Activated CD4-positive, alpha-beta T cell treated with anti-CD3 and anti-CD28 coated beads for 36 hours (primary cell): ENCODE measurements at regions of chrX and their contacts with region 1.

Region 1: DNA sequence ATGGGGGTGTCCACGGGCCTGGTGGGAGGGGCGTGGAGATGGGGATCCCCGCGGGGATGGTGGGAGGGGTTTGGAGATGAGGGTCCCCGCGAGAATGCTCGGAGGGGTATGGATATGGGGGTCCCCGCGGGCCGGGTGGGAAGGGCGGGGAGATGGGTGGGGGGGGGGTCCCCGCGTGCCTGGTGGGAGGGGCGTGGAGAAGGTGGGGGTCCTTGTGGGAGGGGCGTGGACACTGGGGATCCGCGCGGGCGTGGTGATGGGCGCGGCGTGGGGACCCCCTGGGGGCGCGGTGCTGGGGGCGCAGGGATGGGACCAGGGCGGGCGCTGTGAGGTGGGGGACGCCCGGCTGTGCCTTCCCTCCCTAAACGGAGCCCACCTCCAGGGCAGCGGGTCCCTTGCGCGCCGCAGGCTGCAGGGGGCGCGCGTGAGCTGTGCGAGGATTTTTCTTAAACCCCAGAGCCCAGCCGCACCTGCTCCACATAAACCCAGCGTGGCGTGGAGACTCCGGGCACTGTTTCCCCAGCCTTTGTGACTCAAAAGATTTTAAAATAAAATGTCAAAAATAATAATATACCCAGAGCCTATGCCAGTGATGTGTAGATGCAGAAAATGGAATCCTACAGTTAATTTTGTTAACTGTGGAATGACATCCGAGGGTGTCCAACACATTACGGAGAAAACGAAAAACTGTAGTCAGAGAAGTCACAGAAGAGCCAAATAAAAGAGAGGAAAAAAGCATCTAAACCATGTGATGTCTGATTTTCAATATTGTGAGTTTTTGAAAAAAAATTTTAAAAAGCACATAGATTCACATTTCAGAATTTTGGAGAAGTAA is 1.5 kb upstream of the ASMTL start:
- DNase-seq: peak; percentile 96
- ATAC-seq: peak; percentile 57
- H3K4me3 Mint-ChIP-seq: peak overlapping the region; percentile 53
- H3K27ac Mint-ChIP-seq: peak overlapping the region; percentile 47
- H3K4me1 Mint-ChIP-seq: peaks cover 8% of the 10 kb centered on the region
- H3K27me3 Mint-ChIP-seq: no peaks in the 10 kb centered on the region

Region 2: GRCh38 chrX:386768-387575 is 1067.2 kb before region 1 on chrX and contains the start of gene PPP2R3B:
- CTCF ChIA-PET with region 1: no interaction called
- POLR2A ChIA-PET with region 1: no interaction called
- intact Hi-C with region 1: loop called in 1 of 2 experiments (anchors 5 kb)
- DNase-seq: peak; percentile 99
- ATAC-seq: peak; percentile 99
- H3K4me3 Mint-ChIP-seq: peak within 1 kb of the TSS; percentile 88
- H3K27ac Mint-ChIP-seq: peak within 1 kb of the TSS; percentile 96
- H3K4me1 Mint-ChIP-seq: peaks cover 8% of the 10 kb centered on the region
- H3K27me3 Mint-ChIP-seq: no peaks in the 10 kb centered on the region
- total RNA-seq, gene PPP2R3B: 23.3 to 26.8 TPM

Region 3: GRCh38 chrX:1391707-1392375 is 62.3 kb before region 1 on chrX and contains the start of gene SLC25A6:
- CTCF ChIA-PET with region 1: no interaction called
- POLR2A ChIA-PET with region 1: no interaction called
- intact Hi-C with region 1: loop called (anchors 1 kb)
- DNase-seq: peak; percentile 100
- ATAC-seq: peak; percentile 98
- H3K4me3 Mint-ChIP-seq: peak within 1 kb of the TSS; percentile 82
- H3K27ac Mint-ChIP-seq: peak within 1 kb of the TSS; percentile 92
- H3K4me1 Mint-ChIP-seq: peaks cover 58% of the 10 kb centered on the region
- H3K27me3 Mint-ChIP-seq: no peaks in the 10 kb centered on the region
- total RNA-seq, gene SLC25A6: 396 to 456 TPM

Region 4: GRCh38 chrX:1442016-1442665 is 12.0 kb before region 1 on chrX:
- CTCF ChIA-PET with region 1: no interaction called
- POLR2A ChIA-PET with region 1: no interaction called
- intact Hi-C with region 1: no loop called
- DNase-seq: no peak
- ATAC-seq: no peak
- H3K4me3 Mint-ChIP-seq: no peak overlapping the region
- H3K27ac Mint-ChIP-seq: no peak overlapping the region
- H3K4me1 Mint-ChIP-seq: no peaks in the 10 kb centered on the region
- H3K27me3 Mint-ChIP-seq: no peaks in the 10 kb centered on the region

Region 5: DNA sequence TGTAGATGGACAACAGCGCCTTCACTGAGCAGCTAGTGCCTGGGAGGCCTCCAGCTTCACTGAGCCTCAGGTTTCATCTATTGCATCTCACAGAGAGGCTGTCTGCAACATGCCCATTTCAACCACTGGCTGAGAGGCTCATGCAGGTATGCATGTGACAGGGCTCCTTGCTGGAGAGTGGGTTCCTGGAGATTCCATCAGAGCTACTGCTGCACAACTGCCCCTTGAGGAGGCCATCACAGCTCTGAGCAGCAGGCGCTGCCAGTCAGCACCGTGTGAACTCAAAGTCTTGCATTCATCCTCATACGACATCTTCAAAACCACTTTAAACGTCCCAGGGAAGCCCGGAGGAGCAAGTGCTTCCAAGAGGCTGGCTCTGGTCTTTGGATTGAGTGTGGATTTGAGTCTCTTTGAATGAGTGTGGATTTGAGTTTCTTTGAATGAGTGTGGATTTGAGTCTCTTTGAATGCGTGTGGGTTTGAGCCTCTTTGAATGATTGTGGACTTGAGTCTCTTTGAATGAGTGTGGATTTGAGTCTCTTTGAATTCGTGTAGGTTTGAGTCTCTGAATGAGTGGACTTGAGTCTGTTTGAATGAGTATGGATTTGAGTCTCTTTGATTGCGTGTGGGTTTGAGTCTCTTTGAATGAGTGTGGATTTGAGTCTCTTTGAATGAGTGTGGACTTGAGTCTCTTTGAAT is 74.2 kb after region 1 on chrX:
- CTCF ChIA-PET with region 1: no interaction called
- POLR2A ChIA-PET with region 1: no interaction called
- intact Hi-C with region 1: loop called in 1 of 2 experiments (anchors 2 kb)
- DNase-seq: peak; percentile 40
- ATAC-seq: peak; percentile 72
- H3K4me3 Mint-ChIP-seq: no peak overlapping the region
- H3K27ac Mint-ChIP-seq: no peak overlapping the region
- H3K4me1 Mint-ChIP-seq: peaks cover 8% of the 10 kb centered on the region
- H3K27me3 Mint-ChIP-seq: no peaks in the 10 kb centered on the region

Region 6: GRCh38 chrX:1591102-1591900 is 137.1 kb after region 1 on chrX and contains the start of gene AKAP17A:
- CTCF ChIA-PET with region 1: no interaction called
- POLR2A ChIA-PET with region 1: no interaction called
- intact Hi-C with region 1: loop called in 1 of 2 experiments (anchors 1 kb)
- DNase-seq: peak; percentile 99
- ATAC-seq: peak; percentile 91
- H3K4me3 Mint-ChIP-seq: peak within 1 kb of the TSS; percentile 91
- H3K27ac Mint-ChIP-seq: peak within 1 kb of the TSS; percentile 89
- H3K4me1 Mint-ChIP-seq: peaks cover 27% of the 10 kb centered on the region
- H3K27me3 Mint-ChIP-seq: no peaks in the 10 kb centered on the region
- total RNA-seq, gene AKAP17A: 49.7 to 51.2 TPM

Region 7: DNA sequence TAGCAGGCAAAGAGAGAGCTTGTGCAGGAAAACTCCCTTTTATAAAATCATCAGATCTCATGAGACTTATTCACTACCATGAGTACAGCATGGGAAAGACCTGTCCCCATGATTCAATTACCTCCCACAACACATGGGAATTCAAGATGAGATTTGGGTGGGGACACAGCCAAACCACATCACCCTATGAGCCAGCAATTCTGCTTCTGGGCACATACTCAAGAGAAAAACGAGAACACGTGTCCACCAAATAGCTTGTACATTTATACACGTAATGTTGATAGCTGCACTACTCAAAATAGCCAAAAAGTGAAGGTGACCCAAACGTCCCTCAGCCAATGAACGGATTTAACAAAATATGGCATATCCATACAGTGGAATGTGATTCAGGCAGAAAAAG is 1141.1 kb after region 1 on chrX:
- CTCF ChIA-PET with region 1: no interaction called
- POLR2A ChIA-PET with region 1: no interaction called
- intact Hi-C with region 1: loop called in 1 of 2 experiments (anchors 1 kb)
- DNase-seq: no peak
- ATAC-seq: no peak
- H3K4me3 Mint-ChIP-seq: no peak overlapping the region
- H3K27ac Mint-ChIP-seq: no peak overlapping the region
- H3K4me1 Mint-ChIP-seq: no peaks in the 10 kb centered on the region
- H3K27me3 Mint-ChIP-seq: no peaks in the 10 kb centered on the region